ENCODE measurements at regions of chr11 and their contacts with region 1.

Region 1: DNA sequence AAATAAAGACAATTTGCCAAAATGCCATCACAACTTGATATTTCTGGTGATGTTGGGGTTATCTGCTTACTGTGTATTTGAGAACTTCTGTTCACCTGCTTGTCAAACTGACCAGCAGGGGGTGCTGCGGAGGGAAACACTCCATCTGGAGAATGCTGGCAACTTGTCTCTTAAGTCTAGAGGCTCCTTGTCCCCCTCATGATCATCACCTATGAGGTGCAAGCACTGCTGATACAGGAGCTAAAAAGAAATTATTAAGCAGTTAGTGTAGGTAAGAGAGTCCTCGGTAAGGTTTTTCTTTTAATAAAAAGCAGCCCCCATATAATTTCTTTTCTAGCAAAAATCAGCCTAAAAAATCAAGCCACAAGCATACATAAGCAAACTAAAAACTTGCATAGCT is 32.7 kb upstream of the GLYATL1B start:
- H3K4me3 ChIP-seq: no peak overlapping the region
- H3K27ac ChIP-seq: no peak overlapping the region
- H3K4me1 ChIP-seq: no peaks in the 10 kb centered on the region
- CTCF ChIP-seq: no peak

Region 2: GRCh38 chr11:58654079-58654907 is 399.1 kb before region 1 on chr11:
- CTCF ChIA-PET with region 1: interaction called, 11 read pairs
- POLR2A ChIA-PET with region 1: no interaction called
- H3K4me3 ChIP-seq: no peak overlapping the region
- H3K27ac ChIP-seq: no peak overlapping the region
- H3K4me1 ChIP-seq: no peaks in the 10 kb centered on the region
- CTCF ChIP-seq: peak; percentile 50; the same call in 1 of the 2 replicates

Region 3: DNA sequence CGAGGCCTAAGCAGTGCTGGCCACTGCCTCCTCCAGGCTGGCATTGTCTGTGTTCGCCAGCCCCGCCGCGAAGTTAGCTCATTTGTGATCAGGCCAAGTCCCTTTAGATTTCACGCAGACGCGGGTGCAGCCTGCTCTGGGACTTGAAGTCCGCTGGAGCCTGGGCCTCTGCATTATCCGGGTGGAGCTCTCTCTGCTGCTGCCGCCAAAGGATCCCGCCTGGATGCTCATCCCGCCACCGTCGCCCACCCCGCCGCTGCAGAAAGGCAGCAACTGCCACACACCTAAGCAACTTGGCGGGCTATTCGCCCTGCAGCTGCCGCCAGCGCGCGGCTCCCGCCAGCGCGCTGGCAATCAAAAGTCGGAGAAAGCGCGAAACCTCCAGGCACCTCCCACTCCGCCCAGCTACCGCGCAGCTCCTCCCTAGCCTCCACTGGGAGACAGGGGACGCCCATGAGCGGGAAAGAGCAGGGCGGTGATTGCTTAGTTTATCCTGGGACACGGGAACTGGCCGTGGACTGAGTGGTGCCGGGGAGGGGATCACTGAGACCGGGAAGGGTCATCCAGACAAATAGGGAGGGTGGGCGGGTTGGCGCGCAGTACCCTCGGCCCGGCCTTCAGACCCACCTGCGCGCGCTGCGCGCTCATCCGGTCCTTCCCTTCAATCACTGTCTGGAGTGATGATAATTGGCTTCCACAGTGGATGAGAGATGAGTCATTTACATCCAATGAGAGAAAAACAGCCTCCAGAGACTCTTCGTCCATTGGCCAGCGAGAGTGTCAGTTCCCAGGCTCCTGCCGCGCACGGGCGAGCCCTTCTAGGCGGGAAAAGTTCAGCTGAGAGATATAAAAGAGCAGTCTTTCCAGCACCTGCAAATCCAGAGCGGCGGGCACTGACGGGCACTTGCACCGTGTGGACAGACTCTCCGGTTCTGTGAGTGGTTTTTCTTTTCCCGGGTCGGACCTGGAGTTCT is 53.3 kb after region 1 on chr11 and contains the start of gene FAM111B:
- CTCF ChIA-PET with region 1: interaction called, 4 read pairs
- POLR2A ChIA-PET with region 1: interaction called, 10 read pairs
- H3K4me3 ChIP-seq: peak within 1 kb of the TSS; percentile 64
- H3K27ac ChIP-seq: peak within 1 kb of the TSS; percentile 81; the same call in 1 of the 2 replicates
- H3K4me1 ChIP-seq: no peaks in the 10 kb centered on the region
- CTCF ChIP-seq: no peak

Region 4: DNA sequence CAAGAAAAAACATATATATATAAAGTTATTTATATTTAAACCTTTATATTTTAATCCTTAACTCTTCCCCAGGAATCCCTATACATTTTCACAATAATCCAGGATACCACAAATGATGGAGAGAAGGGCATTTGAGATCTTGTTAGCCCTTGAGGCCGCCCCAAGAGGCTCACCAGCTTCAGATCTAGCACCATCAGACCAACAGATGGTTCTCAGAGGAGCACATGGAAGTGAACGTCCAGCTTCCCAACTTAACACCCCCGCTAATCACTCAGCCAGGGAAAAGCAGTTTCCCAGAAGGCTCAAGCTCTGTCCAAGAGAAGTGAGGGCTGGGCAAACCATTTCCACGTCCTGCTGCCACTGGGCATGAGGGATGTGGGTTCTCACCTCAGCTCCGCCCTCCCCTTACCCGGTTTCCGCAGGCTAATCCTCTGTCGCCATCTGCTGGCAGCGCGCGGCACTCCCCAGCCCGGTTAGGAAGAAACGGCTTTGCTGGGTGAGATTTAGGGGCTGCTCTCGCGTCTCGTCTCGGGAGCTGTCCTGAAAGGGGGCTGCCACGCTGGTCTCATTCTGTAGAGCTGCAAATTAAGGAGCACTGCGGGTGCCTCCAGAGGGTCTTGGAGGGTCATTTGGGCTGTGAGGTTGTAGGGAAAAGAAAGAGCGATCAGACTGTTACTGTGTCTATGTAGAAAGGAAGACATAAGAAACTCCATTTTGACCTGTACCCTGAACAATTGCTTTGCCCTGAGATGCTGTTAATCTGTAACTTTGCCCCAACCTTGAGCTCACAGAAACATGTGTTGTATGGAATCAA is 82.5 kb after region 1 on chr11:
- CTCF ChIA-PET with region 1: interaction called, 19 read pairs
- POLR2A ChIA-PET with region 1: no interaction called
- H3K4me3 ChIP-seq: no peak overlapping the region; the same call in 1 of the 2 replicates
- H3K27ac ChIP-seq: no peak overlapping the region
- H3K4me1 ChIP-seq: no peaks in the 10 kb centered on the region
- CTCF ChIP-seq: 0 out of 2 replicates have a peak, but pooled peaks have one; percentile 8

Measured in HEK293 (cell line).